A673 (cell line): ENCODE measurements at regions of chr2 and their contacts with region 1.

Region 1: DNA sequence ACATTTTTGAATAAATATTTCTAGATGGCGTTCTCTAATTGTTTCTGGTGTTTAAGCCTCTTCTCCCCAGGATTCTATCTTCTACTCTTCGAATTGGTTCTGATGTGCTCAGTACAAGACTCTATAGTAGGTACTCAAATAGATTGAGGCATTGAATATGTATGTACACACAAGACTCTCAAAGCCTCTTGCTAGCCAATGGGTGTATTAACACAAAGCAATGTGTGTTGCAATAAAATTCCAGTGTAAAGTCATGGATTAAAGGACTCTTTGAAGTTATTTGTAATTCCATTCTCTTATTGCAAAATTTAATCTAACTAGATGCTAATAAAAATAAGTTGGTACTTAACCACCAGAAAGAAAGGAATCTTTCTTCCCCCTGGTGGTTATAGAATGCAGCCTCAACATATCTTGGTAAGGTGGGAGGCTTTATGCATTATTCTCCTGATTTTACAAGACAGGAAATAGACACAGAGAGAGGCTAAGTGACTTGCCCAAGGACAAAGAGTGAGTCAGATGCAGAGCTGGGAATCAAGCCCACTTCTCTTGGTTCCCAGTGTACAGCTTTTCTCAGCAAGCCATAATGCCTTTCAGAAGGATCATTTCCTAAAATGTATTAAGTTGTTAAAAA is 18.1 kb downstream of the LRP1B start:
- DNase-seq: peak; percentile 98
- H3K4me3 ChIP-seq: no peak overlapping the region
- H3K27ac ChIP-seq: peak overlapping the region; percentile 55
- H3K4me1 ChIP-seq: peaks cover 28% of the 10 kb centered on the region
- H3K27me3 ChIP-seq: no peaks in the 10 kb centered on the region
- CTCF ChIP-seq: peak; percentile 70

Region 2: GRCh38 chr2:142037744-142038143 is 75.0 kb before region 1 on chr2:
- CTCF ChIA-PET with region 1: interaction called, 7 read pairs
- POLR2A ChIA-PET with region 1: no interaction called
- intact Hi-C with region 1: loop called (anchors 5 kb)
- DNase-seq: peak; percentile 78
- H3K4me3 ChIP-seq: no peak overlapping the region
- H3K27ac ChIP-seq: peak overlapping the region; percentile 70
- H3K4me1 ChIP-seq: peaks cover 61% of the 10 kb centered on the region
- H3K27me3 ChIP-seq: no peaks in the 10 kb centered on the region
- CTCF ChIP-seq: peak; percentile 60